Activated CD8-positive, alpha-beta T cell treated with anti-CD3 and anti-CD28 coated beads, Interleukin-2, amount 10 ng/mL, durations not matched to agents 7 days and 5 days (primary cell): ENCODE measurements at regions of chr17 and their contacts with region 1.

Region 1: GRCh38 chr17:74296548-74296936 is 22.5 kb downstream of the DNAI2 start:
- DNase-seq: peak; percentile 59
- ATAC-seq: peak; percentile 60
- H3K4me3 Mint-ChIP-seq: no peak overlapping the region
- H3K27ac Mint-ChIP-seq: no peak overlapping the region
- H3K4me1 Mint-ChIP-seq: peaks cover 10% of the 10 kb centered on the region
- H3K27me3 Mint-ChIP-seq: peaks cover 16% of the 10 kb centered on the region

Region 2: GRCh38 chr17:74176546-74177001 is 120.0 kb before region 1 on chr17:
- CTCF ChIA-PET with region 1: no interaction called
- POLR2A ChIA-PET with region 1: no interaction called
- DNase-seq: peak; percentile 51
- ATAC-seq: peak; percentile 64
- H3K4me3 Mint-ChIP-seq: no peak overlapping the region
- H3K27ac Mint-ChIP-seq: no peak overlapping the region
- H3K4me1 Mint-ChIP-seq: no peaks in the 10 kb centered on the region
- H3K27me3 Mint-ChIP-seq: peaks cover 25% of the 10 kb centered on the region

Region 3: DNA sequence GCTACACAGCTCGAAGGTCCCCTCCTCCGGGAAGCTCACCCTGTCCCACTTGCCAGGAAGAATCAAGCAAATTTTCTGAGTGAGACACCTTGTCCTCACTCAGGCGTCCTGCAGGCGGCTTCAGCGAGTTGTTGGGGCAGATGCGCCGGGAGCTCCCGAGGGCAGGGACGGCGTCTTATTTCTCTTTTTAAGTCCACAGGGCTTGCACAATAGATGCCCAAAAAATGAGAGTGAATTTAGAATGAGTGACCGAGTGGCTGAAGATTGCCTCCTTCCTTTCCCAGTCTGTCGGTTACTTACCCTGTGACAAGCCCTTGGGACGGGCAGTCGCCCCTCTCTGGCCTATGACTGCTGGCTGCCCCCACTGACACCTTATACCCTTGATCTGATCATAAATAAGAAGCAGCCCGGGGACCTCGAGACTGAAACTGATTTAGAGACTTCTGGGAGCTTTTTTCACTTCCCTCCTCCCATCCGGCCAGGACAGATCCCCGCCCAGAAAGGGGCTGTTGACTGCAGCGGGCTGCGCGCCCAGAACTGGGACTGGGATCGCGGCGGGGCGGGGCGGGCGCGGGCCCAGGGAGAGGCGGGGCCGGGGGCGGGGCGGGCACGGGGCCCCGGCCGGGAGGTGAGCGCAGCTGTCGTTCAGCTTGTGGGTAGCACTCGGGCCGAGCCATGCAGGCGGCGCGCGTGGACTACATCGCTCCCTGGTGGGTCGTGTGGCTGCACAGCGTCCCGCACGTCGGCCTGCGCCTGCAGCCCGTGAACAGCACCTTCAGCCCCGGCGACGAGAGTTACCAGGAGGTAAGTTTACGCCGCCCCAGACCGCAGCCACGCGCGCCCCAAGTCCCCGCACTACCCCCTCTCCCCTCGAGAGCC is 83.4 kb before region 1 on chr17 and contains the start of gene TTYH2:
- CTCF ChIA-PET with region 1: interaction called, 10 read pairs
- POLR2A ChIA-PET with region 1: interaction called, 3 read pairs
- DNase-seq: peak; percentile 76
- ATAC-seq: peak; percentile 81
- H3K4me3 Mint-ChIP-seq: peak within 1 kb of the TSS; percentile 77
- H3K27ac Mint-ChIP-seq: peak within 1 kb of the TSS; percentile 66
- H3K4me1 Mint-ChIP-seq: peaks cover 62% of the 10 kb centered on the region
- H3K27me3 Mint-ChIP-seq: no peaks in the 10 kb centered on the region
- total RNA-seq, gene TTYH2: 4.7 to 6.3 TPM

Region 4: GRCh38 chr17:74280093-74280513 is 16.4 kb before region 1 on chr17:
- CTCF ChIA-PET with region 1: interaction called, 22 read pairs
- POLR2A ChIA-PET with region 1: interaction called, 3 read pairs
- DNase-seq: peak; percentile 83
- ATAC-seq: peak; percentile 80
- H3K4me3 Mint-ChIP-seq: no peak overlapping the region
- H3K27ac Mint-ChIP-seq: peak overlapping the region; percentile 92
- H3K4me1 Mint-ChIP-seq: peaks cover 67% of the 10 kb centered on the region
- H3K27me3 Mint-ChIP-seq: no peaks in the 10 kb centered on the region

Region 5: DNA sequence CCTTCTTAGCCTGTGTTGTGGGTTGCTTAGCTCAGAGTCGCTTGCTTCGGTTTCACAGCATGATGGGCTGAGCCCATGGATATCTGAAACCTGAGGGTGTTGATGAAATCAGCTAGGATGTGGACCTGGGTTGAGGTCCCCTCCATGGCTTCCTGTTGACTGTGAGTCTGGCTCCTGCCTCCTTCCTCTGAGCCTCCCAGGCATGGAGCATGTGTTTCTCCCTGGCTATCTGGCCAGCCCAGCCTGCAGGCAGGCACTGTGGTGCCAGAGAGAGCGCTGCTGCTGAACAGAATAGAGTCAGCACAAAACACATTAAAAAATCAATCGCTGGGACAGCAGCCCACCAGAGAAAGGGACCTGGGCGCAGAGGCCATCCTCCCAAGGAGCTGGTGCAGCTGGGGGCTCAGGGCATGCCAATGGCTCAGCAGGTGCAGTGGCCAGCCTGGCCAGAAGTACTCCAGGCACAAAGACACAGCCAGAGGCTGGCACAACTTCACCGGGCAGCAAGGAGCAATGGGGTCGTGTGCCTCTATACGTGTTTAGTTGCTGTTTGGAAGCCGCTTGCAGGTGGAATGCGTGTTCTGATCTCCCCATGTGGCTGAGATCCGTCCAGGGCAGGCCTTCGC is 107.1 kb after region 1 on chr17:
- CTCF ChIA-PET with region 1: no interaction called
- POLR2A ChIA-PET with region 1: no interaction called
- DNase-seq: no peak
- ATAC-seq: no peak
- H3K4me3 Mint-ChIP-seq: no peak overlapping the region
- H3K27ac Mint-ChIP-seq: no peak overlapping the region
- H3K4me1 Mint-ChIP-seq: no peaks in the 10 kb centered on the region
- H3K27me3 Mint-ChIP-seq: peaks cover 8% of the 10 kb centered on the region